ENCODE measurements at regions of chr2 and their contacts with region 1.

Region 1: GRCh38 chr2:75464348-75464946 is 96.3 kb downstream of the EVA1A start:
- DNase-seq: peak in 2 of 5 donors; percentile 47 to 52
- H3K4me3 ChIP-seq: no peak overlapping the region
- H3K27ac ChIP-seq: no peak overlapping the region
- H3K4me1 ChIP-seq: no peaks in the 10 kb centered on the region
- H3K27me3 ChIP-seq: no peaks in the 10 kb centered on the region
- CTCF ChIP-seq: peak; percentile 62

Region 2: GRCh38 chr2:75375646-75376582 is 88.5 kb before region 1 on chr2:
- intact Hi-C with region 1: no loop called
- DNase-seq: no peak
- H3K4me3 ChIP-seq: no peak overlapping the region
- H3K27ac ChIP-seq: no peak overlapping the region
- H3K4me1 ChIP-seq: no peaks in the 10 kb centered on the region
- H3K27me3 ChIP-seq: no peaks in the 10 kb centered on the region
- CTCF ChIP-seq: no peak

Region 3: DNA sequence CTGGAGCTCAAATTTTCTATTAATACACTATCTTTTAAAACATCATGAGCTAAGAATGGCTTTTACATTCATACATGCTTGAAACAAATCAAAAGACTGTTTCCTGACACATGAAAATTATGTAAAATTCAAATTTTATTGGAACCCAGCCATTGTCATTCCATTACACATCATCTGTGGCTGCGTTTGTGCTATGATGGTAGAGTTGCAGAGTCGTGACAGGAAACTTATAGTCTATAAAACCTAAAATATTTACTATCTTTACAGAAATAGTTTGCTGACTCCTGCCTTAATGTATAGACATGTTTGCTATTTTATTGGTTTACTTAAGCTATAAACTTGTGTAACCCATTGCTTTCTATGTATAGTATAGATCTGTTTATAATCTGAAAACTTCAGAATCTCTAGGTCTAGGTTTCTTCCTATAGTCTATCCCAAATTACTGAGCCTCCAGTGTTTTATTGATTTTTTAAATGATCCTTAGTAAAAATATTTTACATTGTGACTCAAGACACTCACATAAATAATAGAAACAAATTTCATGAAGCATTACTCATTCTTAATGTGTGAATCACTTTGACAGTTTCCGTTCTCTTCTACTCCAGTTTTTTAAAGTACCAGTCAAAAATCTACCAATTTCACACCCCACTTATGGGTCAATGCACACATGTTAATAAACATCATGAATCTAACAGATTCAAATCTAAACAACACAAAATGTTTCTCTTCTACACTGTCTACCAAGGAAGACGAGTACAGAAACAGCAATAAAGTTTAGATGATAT is 155.7 kb after region 1 on chr2:
- intact Hi-C with region 1: loop called (anchors 5 kb)
- DNase-seq: no peak
- H3K4me3 ChIP-seq: no peak overlapping the region
- H3K27ac ChIP-seq: no peak overlapping the region
- H3K4me1 ChIP-seq: no peaks in the 10 kb centered on the region
- H3K27me3 ChIP-seq: no peaks in the 10 kb centered on the region
- CTCF ChIP-seq: no peak